Motor neuron (in vitro differentiated cells): ENCODE measurements at regions of chr6 and their contacts with region 1.

Region 1: DNA sequence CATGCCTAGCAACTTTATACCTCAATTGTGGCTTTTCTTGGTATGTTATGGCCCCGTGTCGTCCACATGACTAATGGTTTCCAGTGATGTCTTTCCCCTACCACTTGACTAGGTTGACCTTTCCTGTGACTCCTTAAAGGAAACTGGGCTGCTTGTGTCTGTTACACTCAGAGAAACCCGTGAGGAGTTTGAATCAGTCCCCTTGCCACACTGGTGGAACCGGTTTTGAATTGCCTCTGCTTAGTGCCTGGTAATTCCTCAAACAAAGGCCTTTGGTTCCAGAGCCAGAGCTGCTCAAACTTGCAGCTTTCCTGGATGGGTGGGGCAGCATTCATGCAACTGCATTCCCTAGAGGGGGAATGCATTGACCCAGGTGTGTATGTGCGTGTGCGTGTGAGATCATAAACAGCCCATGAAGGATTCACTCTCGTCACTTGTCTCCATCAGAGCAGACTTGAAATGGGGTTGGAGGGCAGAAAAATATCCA is 22.0 kb downstream of the ECT2L start:
- ATAC-seq: peak in 3 of 8 experiments; percentile 16 to 29 (median 26)
- H3K4me3 ChIP-seq: no peak overlapping the region
- H3K27ac ChIP-seq: no peak overlapping the region
- H3K4me1 ChIP-seq: peaks cover 5 to 11% of the 10 kb centered on the region in 2 donors

Region 2: DNA sequence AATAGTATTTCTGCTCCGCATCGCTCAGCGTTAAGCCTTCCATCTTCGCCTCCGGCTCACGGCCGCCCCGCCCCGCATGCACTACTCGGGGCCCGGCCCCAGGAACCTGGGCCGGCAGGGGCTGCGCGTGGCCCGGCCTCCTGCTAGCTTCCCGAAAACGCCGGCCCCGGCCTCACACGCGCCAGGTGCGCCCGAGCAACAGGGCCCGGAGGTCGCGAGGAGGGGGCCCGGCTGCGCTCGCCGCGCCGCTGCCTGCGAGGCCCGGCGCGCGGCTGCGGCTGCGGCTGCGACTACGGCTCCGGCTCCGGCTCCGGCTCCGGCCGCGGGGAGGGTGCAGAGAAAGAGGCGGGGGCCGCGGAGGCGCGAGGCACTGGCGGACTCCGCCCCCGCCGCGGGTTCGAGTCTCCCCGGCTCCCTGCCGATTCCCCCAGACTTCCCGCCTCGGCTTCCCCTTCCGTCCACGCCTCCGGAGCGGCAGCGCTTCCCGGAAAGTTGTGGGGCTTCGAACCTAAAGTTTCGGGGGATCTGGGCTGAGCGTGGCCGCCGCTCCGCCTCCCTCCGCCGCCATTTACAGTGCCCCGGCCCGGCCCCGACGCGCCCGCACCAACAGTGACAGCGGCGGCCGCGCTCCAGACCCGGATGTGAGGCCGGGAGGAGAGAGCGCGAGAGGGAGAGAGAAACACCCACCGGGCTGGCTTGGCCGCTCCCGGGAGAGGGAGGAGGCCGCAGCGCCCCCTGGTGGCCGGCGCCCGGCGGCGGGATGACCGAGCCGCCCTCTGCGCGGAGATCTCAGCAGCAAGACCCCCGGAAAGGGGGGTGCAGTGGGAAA is 170.0 kb after region 1 on chr6 and contains the start of gene REPS1:
- in situ Hi-C with region 1: loop called in 1 of 9 experiments (anchors 10 kb)
- ATAC-seq: peak; percentile 93 to 95 (median 94)
- H3K4me3 ChIP-seq: peak within 1 kb of the TSS; percentile 53 to 85 (median 69)
- H3K27ac ChIP-seq: peak within 1 kb of the TSS; percentile 81 to 92
- H3K4me1 ChIP-seq: peaks cover 27 to 28% of the 10 kb centered on the region in 2 donors
- total RNA-seq, gene REPS1: 21.0 to 53.2 (median 42.0) TPM

Region 3: DNA sequence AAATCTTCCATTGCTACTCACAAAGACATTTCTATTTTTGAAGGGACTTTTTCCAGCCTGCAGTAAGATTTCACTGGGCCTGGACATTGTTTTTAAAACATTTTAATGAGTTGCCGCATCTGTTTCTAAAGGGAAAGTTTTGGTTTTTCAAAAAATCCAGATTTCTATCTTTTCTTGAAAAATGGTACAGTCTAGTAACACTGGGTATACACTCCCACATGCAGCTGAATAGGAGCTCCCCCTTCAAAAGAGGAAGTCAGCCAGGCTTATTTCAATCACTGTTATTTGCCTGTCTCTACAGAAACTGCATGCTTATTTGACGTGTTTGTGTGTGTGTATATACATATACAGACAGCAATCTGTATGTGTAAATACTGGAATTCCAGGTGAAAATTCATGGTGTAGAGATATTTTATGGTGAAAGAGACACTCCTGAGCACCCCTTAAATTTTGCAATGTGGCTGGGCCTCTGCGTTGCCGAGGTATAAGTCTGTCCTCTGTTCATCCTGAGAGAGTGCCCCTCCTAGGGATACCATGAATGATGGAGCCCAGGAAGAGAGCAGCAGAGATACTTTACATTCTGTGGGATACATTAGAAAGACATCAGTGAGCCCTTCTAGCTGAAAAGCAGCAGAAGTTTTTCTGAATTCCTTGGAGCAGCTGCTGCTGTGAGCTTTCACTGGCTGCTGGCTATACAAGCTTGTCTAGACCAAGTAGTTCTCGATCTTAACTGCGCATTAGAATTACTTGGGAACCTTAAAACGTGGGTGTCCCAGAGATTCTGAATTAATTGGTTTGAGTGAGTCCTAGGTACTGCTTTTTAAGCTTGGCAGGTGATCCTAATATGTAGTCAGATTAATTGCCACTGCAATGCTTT is 198.7 kb after region 1 on chr6:
- in situ Hi-C with region 1: loop called in 1 of 9 experiments (anchors 25 kb)
- ATAC-seq: peak in 5 of 8 experiments; percentile 29 to 67 (median 52)
- H3K4me3 ChIP-seq: no peak overlapping the region
- H3K27ac ChIP-seq: no peak overlapping the region
- H3K4me1 ChIP-seq: peaks cover 9 to 10% of the 10 kb centered on the region in 2 donors

Region 4: GRCh38 chr6:139205843-139206242 is 388.0 kb after region 1 on chr6:
- in situ Hi-C with region 1: no loop called
- ATAC-seq: no peak
- H3K4me3 ChIP-seq: no peak overlapping the region
- H3K27ac ChIP-seq: no peak overlapping the region
- H3K4me1 ChIP-seq: no peaks in the 10 kb centered on the region